ENCODE measurements at regions of chr12 and their contacts with region 1.

Region 1: GRCh38 chr12:21501379-21501956 is at the starts of genes GOLT1B and RECQL:
- H3K4me3 Mint-ChIP-seq: no peak within 1 kb of the TSS
- H3K27ac Mint-ChIP-seq: no peak within 1 kb of the TSS
- H3K4me1 Mint-ChIP-seq: peaks cover 28% of the 10 kb centered on the region
- H3K27me3 Mint-ChIP-seq: no peaks in the 10 kb centered on the region

Region 2: GRCh38 chr12:21438643-21439042 is 62.8 kb before region 1 on chr12:
- intact Hi-C with region 1: loop called (anchors 1 kb)
- H3K4me3 Mint-ChIP-seq: peak overlapping the region; percentile 95
- H3K27ac Mint-ChIP-seq: peak overlapping the region; percentile 96
- H3K4me1 Mint-ChIP-seq: peaks cover 31% of the 10 kb centered on the region
- H3K27me3 Mint-ChIP-seq: peaks cover 16% of the 10 kb centered on the region

Region 3: DNA sequence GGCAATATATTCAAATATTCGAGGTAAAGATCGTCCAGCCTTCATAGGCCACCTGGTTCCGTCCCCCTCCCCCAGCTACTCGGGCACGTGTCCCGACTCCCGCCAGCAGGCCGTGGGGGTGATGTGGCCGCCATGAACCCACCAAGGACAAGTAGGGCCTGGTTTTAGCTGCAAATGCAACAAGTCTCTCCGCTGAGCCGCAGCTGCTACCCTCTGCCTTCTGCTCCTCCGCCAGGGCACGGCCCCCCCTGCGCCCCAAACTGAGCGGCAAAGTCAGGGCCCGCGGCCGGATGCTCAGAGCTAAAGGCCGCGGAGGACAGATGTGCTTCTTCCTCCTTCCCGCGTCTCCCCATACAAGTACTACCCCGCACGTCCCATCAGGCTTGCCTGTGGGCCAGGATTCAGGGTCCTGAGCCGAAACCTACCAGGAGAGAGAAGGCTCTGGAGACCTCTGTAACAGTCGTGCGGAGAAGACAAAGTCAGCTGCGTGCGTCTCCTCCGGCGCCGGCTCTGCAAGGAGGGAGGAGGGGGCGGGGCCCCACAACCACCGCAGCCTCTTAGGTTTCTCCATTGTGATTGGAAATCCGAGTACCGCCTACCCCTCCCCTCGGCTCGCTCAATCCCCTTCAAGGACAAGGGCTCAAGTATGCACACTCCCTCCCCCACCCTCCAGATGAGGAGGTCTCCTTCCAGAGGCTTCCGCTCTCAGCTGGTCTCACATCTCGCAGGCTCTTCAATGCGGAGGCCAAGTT is 156.0 kb after region 1 on chr12 and contains the start of gene LDHB:
- intact Hi-C with region 1: loop called (anchors 5 kb)
- H3K4me3 Mint-ChIP-seq: peak within 1 kb of the TSS; percentile 93
- H3K27ac Mint-ChIP-seq: peak within 1 kb of the TSS; percentile 80
- H3K4me1 Mint-ChIP-seq: peaks cover 22% of the 10 kb centered on the region
- H3K27me3 Mint-ChIP-seq: no peaks in the 10 kb centered on the region

Region 4: DNA sequence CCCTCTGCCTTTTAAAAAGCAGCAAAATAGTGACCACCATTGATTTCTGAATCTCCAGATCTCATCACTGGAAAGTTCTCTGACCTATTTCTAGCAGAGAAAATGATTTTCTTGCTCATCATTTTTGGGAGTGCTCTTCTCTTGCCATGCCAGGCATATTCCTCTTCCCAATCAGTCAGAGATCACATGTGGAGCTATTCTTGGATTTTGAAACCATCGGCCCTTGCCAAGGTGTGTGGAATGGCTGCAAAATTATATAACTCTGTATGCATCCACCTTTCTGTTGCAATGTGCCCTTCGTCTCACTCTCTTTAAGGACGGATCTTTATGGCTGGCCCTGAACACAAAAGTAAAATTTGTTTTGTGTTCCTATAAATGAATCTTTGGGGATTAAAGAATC is 181.6 kb after region 1 on chr12:
- intact Hi-C with region 1: loop called (anchors 5 kb)
- H3K4me3 Mint-ChIP-seq: no peak overlapping the region
- H3K27ac Mint-ChIP-seq: no peak overlapping the region
- H3K4me1 Mint-ChIP-seq: no peaks in the 10 kb centered on the region
- H3K27me3 Mint-ChIP-seq: no peaks in the 10 kb centered on the region

Region 5: DNA sequence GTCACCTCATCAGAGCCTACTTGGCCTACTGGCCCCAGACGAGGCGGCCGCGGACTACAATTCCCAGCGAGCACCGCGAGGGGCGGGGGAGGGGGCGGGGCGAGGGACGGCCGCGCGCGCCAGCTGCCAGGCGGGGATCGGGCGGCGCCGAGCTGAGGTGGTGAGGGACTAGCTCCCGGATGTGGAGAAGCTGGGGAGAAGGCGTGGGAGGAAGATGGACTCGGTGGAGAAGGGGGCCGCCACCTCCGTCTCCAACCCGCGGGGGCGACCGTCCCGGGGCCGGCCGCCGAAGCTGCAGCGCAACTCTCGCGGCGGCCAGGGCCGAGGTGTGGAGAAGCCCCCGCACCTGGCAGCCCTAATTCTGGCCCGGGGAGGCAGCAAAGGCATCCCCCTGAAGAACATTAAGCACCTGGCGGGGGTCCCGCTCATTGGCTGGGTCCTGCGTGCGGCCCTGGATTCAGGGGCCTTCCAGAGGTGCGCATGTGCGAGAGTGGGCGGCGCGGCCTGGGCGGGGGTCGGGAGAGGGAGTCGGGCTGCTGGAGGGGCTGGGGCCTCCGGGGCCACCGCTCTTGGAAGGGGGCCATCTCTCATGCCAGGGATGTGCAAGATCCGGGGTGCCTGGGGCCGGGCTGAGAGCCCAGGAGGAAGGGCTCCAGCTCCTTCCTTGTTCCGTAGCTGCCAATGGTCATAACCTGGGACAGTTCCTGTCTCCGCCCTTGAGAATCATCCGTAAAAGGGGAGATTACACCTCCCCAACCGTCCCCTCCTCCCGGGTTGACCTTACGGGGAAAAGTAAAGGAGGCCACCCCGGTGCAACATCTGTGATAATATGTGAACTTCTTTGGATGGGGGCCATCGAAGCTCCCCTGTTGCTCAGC is 544.9 kb after region 1 on chr12 and contains the start of gene CMAS:
- intact Hi-C with region 1: loop called (anchors 5 kb)
- H3K4me3 Mint-ChIP-seq: peak within 1 kb of the TSS; percentile 92
- H3K27ac Mint-ChIP-seq: peak within 1 kb of the TSS; percentile 73
- H3K4me1 Mint-ChIP-seq: peaks cover 34% of the 10 kb centered on the region
- H3K27me3 Mint-ChIP-seq: no peaks in the 10 kb centered on the region